ENCODE measurements at regions of chr11 and their contacts with region 1.

Region 1: DNA sequence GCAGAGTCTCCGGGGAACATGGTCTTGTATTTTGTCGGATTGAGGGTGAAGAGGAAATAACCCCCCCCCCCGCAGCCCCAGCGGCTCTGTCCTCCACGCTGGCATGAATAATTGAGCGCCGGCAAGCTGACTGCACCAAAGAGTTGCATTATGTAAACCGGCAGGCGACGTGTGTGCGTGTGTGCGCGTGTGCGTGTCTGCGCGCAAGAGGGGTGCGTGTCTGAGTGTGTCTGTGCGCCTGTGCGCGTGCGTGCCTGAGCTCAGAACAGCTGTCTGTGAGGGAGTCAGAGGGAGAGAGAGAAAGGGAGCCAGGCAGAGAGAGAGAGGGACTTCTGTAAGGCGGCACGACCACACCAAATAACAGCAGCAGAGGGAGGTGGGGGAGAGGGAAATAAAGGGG is 94.4 kb downstream of the SCN3B start:
- DNase-seq: no peak
- H3K4me3 ChIP-seq: no peak overlapping the region
- H3K4me3 Mint-ChIP-seq: peak overlapping the region; percentile 46
- H3K27ac Mint-ChIP-seq: no peak overlapping the region
- H3K4me1 ChIP-seq: no peaks in the 10 kb centered on the region
- H3K4me1 Mint-ChIP-seq: no peaks in the 10 kb centered on the region
- H3K27me3 ChIP-seq: peaks cover 3% of the 10 kb centered on the region; the same call in 1 of the 2 replicates
- H3K27me3 Mint-ChIP-seq: peaks cover 29% of the 10 kb centered on the region
- CTCF ChIP-seq: no peak

Region 2: GRCh38 chr11:123511037-123511870 is 48.8 kb before region 1 on chr11:
- CTCF ChIA-PET with region 1: interaction called, 7 read pairs
- POLR2A ChIA-PET with region 1: no interaction called
- intact Hi-C with region 1: loop called (anchors 1 kb)
- DNase-seq: peak; percentile 89
- H3K4me3 ChIP-seq: no peak overlapping the region
- H3K4me3 Mint-ChIP-seq: no peak overlapping the region
- H3K27ac Mint-ChIP-seq: no peak overlapping the region
- H3K4me1 ChIP-seq: no peaks in the 10 kb centered on the region
- H3K4me1 Mint-ChIP-seq: no peaks in the 10 kb centered on the region
- H3K27me3 ChIP-seq: no peaks in the 10 kb centered on the region; the same call in 1 of the 2 replicates
- H3K27me3 Mint-ChIP-seq: peaks cover 19% of the 10 kb centered on the region
- CTCF ChIP-seq: peak; percentile 96 to 97

Measured in Caco-2 (cell line).